Heart left ventricle (tissue), 16 donors: ENCODE measurements at regions of chr4 and their contacts with region 1.

Region 1: GRCh38 chr4:120922381-120923206 is at the start of gene PRDM5:
- DNase-seq: peak; percentile 69 to 82 (median 73)
- ATAC-seq: peak; percentile 49 to 84 (median 78)
- H3K4me3 ChIP-seq: peak within 1 kb of the TSS; percentile 61 to 97 (median 81)
- H3K27ac ChIP-seq: peak within 1 kb of the TSS; percentile 84 to 98 (median 95)
- H3K4me1 ChIP-seq: peaks cover 0 to 44% (median 32%) of the 10 kb centered on the region in 12 donors
- H3K27me3 ChIP-seq: peaks cover 0 to 20% (median 0%) of the 10 kb centered on the region in 9 donors
- CTCF ChIP-seq: peak in 4 of 12 donors; percentile 21 to 34 (median 28)
- POLR2A ChIP-seq: no peak
- total RNA-seq, gene PRDM5: 4.9 to 19.7 (median 12.0) TPM

Region 2: GRCh38 chr4:120819805-120820437 is 102.7 kb before region 1 on chr4:
- intact Hi-C with region 1: loop called in 1 of 10 experiments (anchors 5 kb)
- DNase-seq: no peak
- ATAC-seq: peak in 3 of 4 donors; percentile 54 to 65 (median 61)
- H3K4me3 ChIP-seq: no peak overlapping the region
- H3K27ac ChIP-seq: peak overlapping the region in 1 of 12 donors; percentile 23
- H3K4me1 ChIP-seq: peaks cover 0 to 7% (median 0%) of the 10 kb centered on the region in 12 donors
- H3K27me3 ChIP-seq: no peaks in the 10 kb centered on the region
- CTCF ChIP-seq: no peak
- POLR2A ChIP-seq: no peak

Region 3: GRCh38 chr4:121072224-121073003 is 149.8 kb after region 1 on chr4 and contains the start of gene NDNF:
- intact Hi-C with region 1: loop called in 9 of 10 experiments (anchors 5 to 10 kb)
- DNase-seq: peak; percentile 38 to 72 (median 48)
- ATAC-seq: peak; percentile 45 to 80 (median 72)
- H3K4me3 ChIP-seq: peak within 1 kb of the TSS; percentile 50 to 83 (median 66)
- H3K27ac ChIP-seq: peak within 1 kb of the TSS in 11 of 12 donors; percentile 39 to 84 (median 70)
- H3K4me1 ChIP-seq: peaks cover 0 to 25% (median 0%) of the 10 kb centered on the region in 12 donors
- H3K27me3 ChIP-seq: peaks cover 0 to 56% (median 0%) of the 10 kb centered on the region in 9 donors
- CTCF ChIP-seq: peak in 1 of 12 donors; percentile 4
- POLR2A ChIP-seq: no peak
- total RNA-seq, gene NDNF: 3.0 to 11.2 (median 8.2) TPM